OCI-LY7 (cell line): ENCODE measurements at regions of chr5 and their contacts with region 1.

Region 1: GRCh38 chr5:153496835-153497234 is 6.4 kb downstream of the GRIA1 start:
- DNase-seq: peak; percentile 64
- H3K4me3 ChIP-seq: no peak overlapping the region
- H3K27ac ChIP-seq: no peak overlapping the region
- H3K4me1 ChIP-seq: peaks cover 6% of the 10 kb centered on the region
- CTCF ChIP-seq: peak; percentile 97

Region 2: DNA sequence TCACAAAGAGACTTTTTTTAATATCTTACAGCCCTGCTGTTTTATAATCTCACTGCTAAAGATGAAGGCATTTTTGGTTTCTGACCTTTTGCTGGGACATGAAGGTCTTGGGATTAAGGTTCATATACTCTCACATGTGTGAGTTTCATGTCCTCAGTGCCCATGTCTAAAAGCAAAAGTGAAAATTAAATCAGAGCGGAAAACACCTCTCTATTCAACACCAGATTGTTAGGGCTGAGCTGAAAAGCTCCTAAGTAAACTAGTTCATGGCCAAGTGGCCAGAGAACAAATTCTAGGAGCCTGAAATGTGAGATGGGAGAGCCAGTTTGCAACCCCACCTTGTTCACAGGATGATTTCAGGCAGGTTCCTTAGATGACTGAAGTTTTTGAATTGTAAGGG is 104.5 kb after region 1 on chr5:
- CTCF ChIA-PET with region 1: no interaction called
- POLR2A ChIA-PET with region 1: no interaction called
- intact Hi-C with region 1: loop called (anchors 2 kb)
- DNase-seq: peak; percentile 74
- H3K4me3 ChIP-seq: peak overlapping the region; percentile 26
- H3K27ac ChIP-seq: peak overlapping the region; percentile 91
- H3K4me1 ChIP-seq: peaks cover 72% of the 10 kb centered on the region
- CTCF ChIP-seq: no peak

Region 3: GRCh38 chr5:153629027-153629895 is 132.4 kb after region 1 on chr5:
- CTCF ChIA-PET with region 1: interaction called, 15 read pairs
- POLR2A ChIA-PET with region 1: interaction called, 3 read pairs
- intact Hi-C with region 1: loop called (anchors 2 kb)
- DNase-seq: peak; percentile 72
- H3K4me3 ChIP-seq: no peak overlapping the region
- H3K27ac ChIP-seq: peak overlapping the region; percentile 28
- H3K4me1 ChIP-seq: peaks cover 69% of the 10 kb centered on the region
- CTCF ChIP-seq: peak; percentile 69

Region 4: GRCh38 chr5:153756540-153756939 is 259.7 kb after region 1 on chr5:
- CTCF ChIA-PET with region 1: no interaction called
- POLR2A ChIA-PET with region 1: interaction called, 3 read pairs
- intact Hi-C with region 1: loop called (anchors 1 kb)
- DNase-seq: peak; percentile 11
- H3K4me3 ChIP-seq: no peak overlapping the region
- H3K27ac ChIP-seq: no peak overlapping the region
- H3K4me1 ChIP-seq: no peaks in the 10 kb centered on the region
- CTCF ChIP-seq: peak; percentile 61

Region 5: GRCh38 chr5:153964880-153965645 is 468.2 kb after region 1 on chr5:
- CTCF ChIA-PET with region 1: interaction called, 10 read pairs
- POLR2A ChIA-PET with region 1: interaction called, 3 read pairs
- intact Hi-C with region 1: loop called (anchors 2 kb)
- DNase-seq: peak; percentile 74
- H3K4me3 ChIP-seq: no peak overlapping the region
- H3K27ac ChIP-seq: no peak overlapping the region
- H3K4me1 ChIP-seq: no peaks in the 10 kb centered on the region
- CTCF ChIP-seq: peak; percentile 95